Common myeloid progenitor, CD34-positive (primary cell): ENCODE measurements at regions of chr2 and their contacts with region 1.

Region 1: GRCh38 chr2:50401772-50402653 is 629.9 kb downstream of the NRXN1 start:
- DNase-seq: peak; percentile 57 to 78 (median 68)
- H3K4me3 ChIP-seq: no peak overlapping the region
- H3K27ac ChIP-seq: no peak overlapping the region
- H3K4me1 ChIP-seq: no peaks in the 10 kb centered on the region
- H3K27me3 ChIP-seq: peaks cover 0 to 3% (median 0%) of the 10 kb centered on the region in 5 experiments

Region 2: GRCh38 chr2:48946449-48947048 is 1455.5 kb before region 1 on chr2:
- CTCF ChIA-PET with region 1: interaction called, 19 read pairs
- POLR2A ChIA-PET with region 1: no interaction called
- DNase-seq: peak; percentile 51 to 73 (median 73)
- H3K4me3 ChIP-seq: no peak overlapping the region
- H3K27ac ChIP-seq: no peak overlapping the region
- H3K4me1 ChIP-seq: no peaks in the 10 kb centered on the region
- H3K27me3 ChIP-seq: no peaks in the 10 kb centered on the region

Region 3: GRCh38 chr2:49616800-49617199 is 785.2 kb before region 1 on chr2:
- CTCF ChIA-PET with region 1: interaction called, 12 read pairs
- POLR2A ChIA-PET with region 1: no interaction called
- DNase-seq: peak; percentile 25 to 61 (median 50)
- H3K4me3 ChIP-seq: no peak overlapping the region
- H3K27ac ChIP-seq: no peak overlapping the region
- H3K4me1 ChIP-seq: no peaks in the 10 kb centered on the region
- H3K27me3 ChIP-seq: no peaks in the 10 kb centered on the region

Region 4: DNA sequence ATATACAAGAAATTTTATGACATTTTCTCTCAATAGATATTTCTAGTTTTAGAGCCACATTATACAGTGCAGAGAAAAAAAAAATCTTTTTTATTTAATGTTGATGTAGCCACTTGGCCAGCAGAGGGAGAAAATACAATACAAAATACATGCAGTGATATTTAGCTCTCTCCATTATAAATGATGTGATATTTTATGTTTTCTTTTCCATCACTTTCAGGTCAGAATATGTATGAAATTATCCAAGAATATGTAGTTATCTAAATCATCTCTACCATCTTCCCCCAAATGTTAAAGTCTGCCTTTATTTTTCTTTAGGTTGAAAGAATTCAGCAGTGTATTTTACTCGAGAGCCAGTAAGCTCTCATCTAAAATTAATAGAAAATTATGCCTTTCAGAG is 714.1 kb before region 1 on chr2:
- CTCF ChIA-PET with region 1: interaction called, 12 read pairs
- POLR2A ChIA-PET with region 1: no interaction called
- DNase-seq: peak; percentile 12 to 44 (median 35)
- H3K4me3 ChIP-seq: no peak overlapping the region
- H3K27ac ChIP-seq: no peak overlapping the region
- H3K4me1 ChIP-seq: no peaks in the 10 kb centered on the region
- H3K27me3 ChIP-seq: peaks cover 0 to 7% (median 0%) of the 10 kb centered on the region in 5 experiments

Region 5: GRCh38 chr2:49770919-49771318 is 631.1 kb before region 1 on chr2:
- CTCF ChIA-PET with region 1: interaction called, 23 read pairs
- POLR2A ChIA-PET with region 1: no interaction called
- DNase-seq: peak; percentile 48 to 70 (median 62)
- H3K4me3 ChIP-seq: no peak overlapping the region
- H3K27ac ChIP-seq: no peak overlapping the region
- H3K4me1 ChIP-seq: no peaks in the 10 kb centered on the region
- H3K27me3 ChIP-seq: no peaks in the 10 kb centered on the region

Region 6: DNA sequence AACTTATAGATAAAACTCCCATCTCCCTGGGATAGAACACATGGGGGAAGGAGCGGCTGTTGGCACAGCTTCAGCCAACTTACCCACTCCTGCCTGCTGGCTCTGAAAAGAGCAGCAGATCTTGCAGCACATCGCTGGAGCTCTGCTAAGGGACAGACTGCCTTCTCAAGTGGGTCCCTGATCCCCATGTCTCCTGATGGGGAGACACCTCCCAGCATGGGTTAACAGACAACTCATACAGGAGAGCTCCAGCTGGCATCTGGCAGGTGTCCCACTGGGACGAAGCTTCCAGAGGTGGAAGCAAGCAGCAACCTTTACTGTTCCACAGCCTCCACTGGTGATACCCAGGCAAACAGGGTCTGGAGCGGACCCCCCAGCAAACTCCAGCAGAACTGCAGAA is 43.4 kb before region 1 on chr2:
- CTCF ChIA-PET with region 1: no interaction called
- POLR2A ChIA-PET with region 1: no interaction called
- DNase-seq: no peak
- H3K4me3 ChIP-seq: no peak overlapping the region
- H3K27ac ChIP-seq: no peak overlapping the region
- H3K4me1 ChIP-seq: no peaks in the 10 kb centered on the region
- H3K27me3 ChIP-seq: peaks cover 0 to 4% (median 0%) of the 10 kb centered on the region in 5 experiments

Region 7: DNA sequence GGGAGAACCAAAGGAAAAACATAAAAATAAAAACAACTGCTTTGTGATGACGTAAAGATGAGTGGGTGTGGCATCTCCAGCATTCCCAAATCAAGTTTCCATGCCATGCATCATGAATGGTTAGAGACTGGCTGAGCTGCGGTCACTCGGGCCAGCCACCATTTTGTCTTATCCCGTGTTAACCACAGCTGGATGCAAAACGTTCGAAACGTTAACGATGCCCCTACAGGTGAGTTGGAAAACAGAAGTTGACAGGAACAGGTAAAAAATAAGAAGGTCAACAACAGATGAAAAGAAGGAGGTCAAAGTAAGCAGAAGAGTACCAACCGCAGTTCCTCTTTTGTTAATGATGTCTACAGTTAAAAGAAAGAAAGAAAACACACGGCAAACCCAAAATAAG is 218.8 kb after region 1 on chr2:
- CTCF ChIA-PET with region 1: no interaction called
- POLR2A ChIA-PET with region 1: no interaction called
- DNase-seq: no peak
- H3K4me3 ChIP-seq: no peak overlapping the region
- H3K27ac ChIP-seq: no peak overlapping the region
- H3K4me1 ChIP-seq: no peaks in the 10 kb centered on the region
- H3K27me3 ChIP-seq: no peaks in the 10 kb centered on the region